Activated CD4-positive, alpha-beta memory T cell treated with anti-CD3 and anti-CD28 coated beads for 36 hours (primary cell): ENCODE measurements at regions of chr2 and their contacts with region 1.

Region 1: GRCh38 chr2:54052825-54053718 is 62.3 kb upstream of the ACYP2 start:
- DNase-seq: no peak
- H3K4me3 Mint-ChIP-seq: no peak overlapping the region
- H3K27ac Mint-ChIP-seq: peak overlapping the region; percentile 52
- H3K4me1 Mint-ChIP-seq: peaks cover 27% of the 10 kb centered on the region
- H3K27me3 Mint-ChIP-seq: no peaks in the 10 kb centered on the region

Region 2: GRCh38 chr2:53767405-53768241 is 285.4 kb before region 1 on chr2 and contains the start of gene CHAC2:
- CTCF ChIA-PET with region 1: no interaction called
- POLR2A ChIA-PET with region 1: no interaction called
- intact Hi-C with region 1: loop called (anchors 5 kb)
- DNase-seq: peak; percentile 91
- H3K4me3 Mint-ChIP-seq: peak within 1 kb of the TSS; percentile 93
- H3K27ac Mint-ChIP-seq: peak within 1 kb of the TSS; percentile 97
- H3K4me1 Mint-ChIP-seq: peaks cover 27% of the 10 kb centered on the region
- H3K27me3 Mint-ChIP-seq: no peaks in the 10 kb centered on the region
- total RNA-seq, gene CHAC2: 13.2 to 15.0 TPM

Region 3: GRCh38 chr2:53880756-53881155 is 172.3 kb before region 1 on chr2:
- CTCF ChIA-PET with region 1: no interaction called
- POLR2A ChIA-PET with region 1: no interaction called
- intact Hi-C with region 1: loop called (anchors 10 kb)
- DNase-seq: no peak
- H3K4me3 Mint-ChIP-seq: no peak overlapping the region
- H3K27ac Mint-ChIP-seq: no peak overlapping the region
- H3K4me1 Mint-ChIP-seq: peaks cover 24% of the 10 kb centered on the region
- H3K27me3 Mint-ChIP-seq: no peaks in the 10 kb centered on the region

Region 4: GRCh38 chr2:54041135-54041534 is 11.9 kb before region 1 on chr2:
- CTCF ChIA-PET with region 1: no interaction called
- POLR2A ChIA-PET with region 1: interaction called, 3 read pairs
- intact Hi-C with region 1: loop called (anchors 1 kb)
- DNase-seq: peak; percentile 79
- H3K4me3 Mint-ChIP-seq: no peak overlapping the region
- H3K27ac Mint-ChIP-seq: no peak overlapping the region
- H3K4me1 Mint-ChIP-seq: peaks cover 3% of the 10 kb centered on the region
- H3K27me3 Mint-ChIP-seq: no peaks in the 10 kb centered on the region

Region 5: GRCh38 chr2:54081574-54081973 is 28.5 kb after region 1 on chr2:
- CTCF ChIA-PET with region 1: interaction called, 3 read pairs
- POLR2A ChIA-PET with region 1: no interaction called
- intact Hi-C with region 1: loop called (anchors 1 kb)
- DNase-seq: peak; percentile 86
- H3K4me3 Mint-ChIP-seq: no peak overlapping the region
- H3K27ac Mint-ChIP-seq: no peak overlapping the region
- H3K4me1 Mint-ChIP-seq: peaks cover 6% of the 10 kb centered on the region
- H3K27me3 Mint-ChIP-seq: no peaks in the 10 kb centered on the region

Region 6: DNA sequence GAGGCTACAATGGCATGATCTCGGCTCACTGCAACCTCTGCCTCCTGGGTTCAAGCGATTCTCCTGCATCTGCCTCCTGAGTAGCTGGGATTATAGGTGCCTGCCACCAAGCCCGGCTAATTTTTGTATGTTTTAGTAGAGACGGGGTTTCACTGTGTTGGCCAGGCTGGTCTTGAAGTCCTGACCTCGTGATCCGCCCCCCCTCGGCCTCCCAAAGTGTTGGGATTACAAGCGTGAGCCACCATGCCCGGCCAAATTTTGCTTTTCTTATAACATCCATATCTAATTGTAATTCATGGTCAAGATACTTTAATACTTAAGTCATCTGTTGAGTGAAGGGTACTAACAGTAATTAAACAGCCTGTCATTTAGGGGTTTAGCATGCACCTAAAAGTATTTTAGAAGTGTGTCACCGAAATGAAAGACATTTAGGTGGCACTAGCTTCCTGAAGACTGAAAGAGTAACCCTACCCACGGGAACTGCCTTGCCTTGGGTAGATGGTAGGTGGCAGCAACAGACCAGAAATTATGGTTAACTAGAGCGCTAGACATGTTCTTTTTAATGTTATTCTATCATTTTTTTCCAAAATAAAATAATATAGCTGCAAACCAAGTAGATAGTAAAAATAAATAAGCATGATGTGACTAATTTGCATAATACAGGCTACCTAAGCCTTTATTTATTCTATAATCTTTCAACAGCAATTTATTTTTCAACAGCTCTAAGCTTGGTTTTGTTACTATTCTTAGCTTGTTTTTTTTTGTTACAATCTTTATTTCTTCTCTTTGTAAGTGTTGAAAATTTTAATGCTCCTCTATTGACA is 53.8 kb after region 1 on chr2:
- CTCF ChIA-PET with region 1: interaction called, 9 read pairs
- POLR2A ChIA-PET with region 1: no interaction called
- intact Hi-C with region 1: loop called (anchors 5 kb)
- DNase-seq: peak; percentile 58
- H3K4me3 Mint-ChIP-seq: no peak overlapping the region
- H3K27ac Mint-ChIP-seq: no peak overlapping the region
- H3K4me1 Mint-ChIP-seq: peaks cover 5% of the 10 kb centered on the region
- H3K27me3 Mint-ChIP-seq: no peaks in the 10 kb centered on the region